ENCODE measurements at regions of chr20 and their contacts with region 1.

Region 1: DNA sequence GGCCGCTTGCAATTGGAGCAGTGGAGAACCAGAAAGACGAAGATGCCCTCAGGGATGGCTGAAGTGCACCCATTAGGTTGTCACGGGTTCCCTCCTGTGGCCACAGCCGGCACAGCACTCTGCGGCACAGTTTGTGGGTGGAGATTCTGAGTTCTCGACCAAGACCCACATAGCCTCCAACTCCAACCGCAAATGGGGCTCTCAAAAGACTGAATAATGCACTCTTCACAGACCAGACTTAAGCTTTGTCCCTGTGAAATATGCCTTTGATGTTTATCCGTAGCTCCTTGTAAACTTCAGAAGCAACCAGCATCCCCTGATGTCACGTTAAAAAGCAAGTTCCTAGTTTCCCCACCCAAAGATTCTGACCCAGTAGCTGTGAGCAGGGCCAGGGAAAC is 934 bp upstream of the CST9 start:
- DNase-seq: peak; percentile 78 to 94
- H3K4me3 ChIP-seq: no peak overlapping the region
- CTCF ChIP-seq: peak in 1 of 3 donors; percentile 90
- POLR2A ChIP-seq: no peak

Region 2: DNA sequence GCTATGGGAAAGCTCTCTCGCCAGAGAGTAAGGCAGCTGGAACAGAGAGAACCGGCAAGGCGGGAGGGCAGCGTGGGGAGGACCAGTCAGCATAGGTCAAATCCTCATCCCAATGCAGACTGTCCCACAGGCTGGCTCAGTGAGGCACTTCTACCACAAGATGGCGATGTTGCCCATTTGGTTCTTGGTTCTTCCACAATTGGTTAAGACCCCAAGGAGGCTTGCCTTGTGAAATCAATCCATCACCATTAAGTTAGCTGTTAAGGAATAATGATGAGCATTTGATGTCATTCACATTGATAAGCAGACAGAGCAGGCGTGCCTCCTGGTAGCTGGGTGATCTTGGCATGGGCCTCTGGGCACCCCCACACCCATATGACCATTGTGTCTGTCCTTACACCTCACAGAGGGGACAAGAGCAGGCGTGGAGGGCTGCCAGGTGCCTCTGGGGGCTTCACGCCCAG is 164.8 kb before region 1 on chr20:
- intact Hi-C with region 1: loop called (anchors 5 kb)
- DNase-seq: peak; percentile 68 to 90
- H3K4me3 ChIP-seq: no peak overlapping the region
- CTCF ChIP-seq: peak in 1 of 3 donors; percentile 64
- POLR2A ChIP-seq: no peak

Region 3: DNA sequence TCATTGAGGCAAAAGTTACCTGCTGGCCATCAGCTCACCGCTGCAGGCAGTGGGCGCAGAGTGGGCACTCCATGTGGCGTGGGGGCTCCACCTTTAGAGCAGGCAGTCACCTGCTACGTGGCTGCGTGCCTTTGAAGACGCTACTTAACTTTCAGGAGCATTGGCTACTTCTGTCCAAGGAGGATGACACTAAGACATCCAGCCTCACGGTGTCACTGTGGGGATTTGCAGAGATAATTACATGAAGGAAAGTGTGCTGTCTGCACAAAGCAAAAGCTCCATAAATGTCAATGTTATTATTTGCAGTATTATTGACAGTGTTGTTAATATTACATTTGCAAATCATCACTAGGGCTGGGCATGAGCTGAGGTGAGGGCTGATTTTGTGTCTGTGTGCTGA is 696.7 kb after region 1 on chr20:
- intact Hi-C with region 1: no loop called
- DNase-seq: no peak
- H3K4me3 ChIP-seq: no peak overlapping the region
- CTCF ChIP-seq: no peak
- POLR2A ChIP-seq: no peak

Measured in lower leg skin (tissue), 4 donors.